ENCODE measurements at regions of chr20 and their contacts with region 1.

Region 1: GRCh38 chr20:21615617-21616080 is 89.8 kb upstream of the PAX1 start:
- DNase-seq: peak; percentile 77 to 98 (median 87)

Region 2: DNA sequence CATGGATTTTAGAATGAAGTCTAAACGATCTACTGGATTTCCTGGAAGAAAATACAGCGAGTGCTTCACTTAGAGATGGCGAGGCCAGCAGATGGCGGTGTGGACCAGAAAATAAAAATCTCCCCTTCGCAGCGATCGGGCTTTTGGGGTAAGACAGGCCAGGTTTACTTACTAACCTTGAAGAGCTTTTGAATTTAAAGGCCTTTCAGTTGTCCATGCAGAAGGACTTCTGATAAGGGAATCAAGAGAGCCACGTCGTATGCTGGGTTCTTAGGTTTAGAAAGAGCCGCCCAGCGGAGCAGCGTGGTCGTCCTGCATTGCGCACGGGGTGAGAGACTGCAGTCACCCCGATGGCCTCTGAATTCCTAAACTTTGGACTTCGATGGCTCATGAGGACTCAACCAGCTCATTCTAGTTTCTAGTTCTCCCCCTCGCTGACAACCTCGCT is 778.1 kb before region 1 on chr20:
- intact Hi-C with region 1: loop called (anchors 5 kb)
- DNase-seq: peak; percentile 50 to 96 (median 80)

Region 3: DNA sequence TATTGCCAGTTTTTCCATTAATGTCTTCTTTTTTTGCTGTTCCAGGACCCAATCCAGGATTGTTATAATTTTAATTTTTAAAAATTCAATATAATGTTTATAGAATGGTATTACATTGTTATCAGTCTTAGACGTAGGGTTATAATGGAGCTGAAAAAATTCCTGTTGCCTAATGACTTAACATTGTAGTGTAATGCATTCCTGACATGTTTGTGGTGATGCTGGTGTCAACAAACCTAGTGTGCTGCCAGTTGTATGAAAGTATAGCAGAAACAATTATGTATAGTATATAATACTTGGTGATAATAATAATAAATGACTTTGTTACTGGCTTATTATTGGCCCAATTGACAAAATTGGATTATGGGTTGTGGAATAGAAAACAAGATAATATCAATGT is 459.4 kb before region 1 on chr20:
- intact Hi-C with region 1: no loop called
- DNase-seq: no peak

Region 4: DNA sequence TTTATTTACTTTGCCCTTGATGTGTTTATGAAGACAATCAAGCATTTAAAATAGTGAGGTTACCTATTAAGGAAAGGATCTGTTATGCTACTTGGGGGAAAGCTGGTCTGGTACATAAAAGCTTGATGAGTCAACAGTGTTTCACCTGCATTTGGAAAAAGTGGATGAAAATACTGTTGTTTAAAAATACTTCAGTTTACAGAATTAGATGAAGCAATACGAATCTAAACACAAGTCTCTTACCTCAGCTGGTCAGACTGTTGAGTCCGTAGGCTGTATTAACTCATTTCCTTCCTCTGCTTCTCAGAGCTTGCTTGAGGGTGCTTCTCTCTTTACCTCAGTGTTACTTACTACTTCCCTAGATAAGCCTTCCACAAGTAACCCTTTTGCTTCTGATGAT is 254.4 kb before region 1 on chr20:
- intact Hi-C with region 1: loop called (anchors 5 kb)
- DNase-seq: no peak

Region 5: DNA sequence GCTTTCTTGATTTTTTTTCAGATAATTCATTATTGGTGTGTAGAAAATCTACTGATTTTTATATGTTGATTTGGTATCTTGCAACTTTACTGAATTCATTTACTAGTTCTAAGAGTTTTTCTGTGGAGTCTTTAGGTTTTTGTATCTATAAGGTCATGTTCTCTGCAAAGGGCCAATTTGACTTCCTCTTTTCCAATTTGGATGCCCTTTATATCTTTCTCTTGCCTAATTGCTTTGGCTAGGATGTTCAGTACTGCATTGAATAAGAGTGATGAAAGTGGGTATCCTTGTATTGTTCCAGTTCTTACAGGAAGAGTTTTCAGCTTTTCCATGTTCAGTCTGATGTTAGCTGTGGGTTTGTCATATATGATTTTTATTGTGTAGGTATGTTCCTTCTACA is 203.9 kb before region 1 on chr20:
- intact Hi-C with region 1: no loop called
- DNase-seq: no peak

Region 6: DNA sequence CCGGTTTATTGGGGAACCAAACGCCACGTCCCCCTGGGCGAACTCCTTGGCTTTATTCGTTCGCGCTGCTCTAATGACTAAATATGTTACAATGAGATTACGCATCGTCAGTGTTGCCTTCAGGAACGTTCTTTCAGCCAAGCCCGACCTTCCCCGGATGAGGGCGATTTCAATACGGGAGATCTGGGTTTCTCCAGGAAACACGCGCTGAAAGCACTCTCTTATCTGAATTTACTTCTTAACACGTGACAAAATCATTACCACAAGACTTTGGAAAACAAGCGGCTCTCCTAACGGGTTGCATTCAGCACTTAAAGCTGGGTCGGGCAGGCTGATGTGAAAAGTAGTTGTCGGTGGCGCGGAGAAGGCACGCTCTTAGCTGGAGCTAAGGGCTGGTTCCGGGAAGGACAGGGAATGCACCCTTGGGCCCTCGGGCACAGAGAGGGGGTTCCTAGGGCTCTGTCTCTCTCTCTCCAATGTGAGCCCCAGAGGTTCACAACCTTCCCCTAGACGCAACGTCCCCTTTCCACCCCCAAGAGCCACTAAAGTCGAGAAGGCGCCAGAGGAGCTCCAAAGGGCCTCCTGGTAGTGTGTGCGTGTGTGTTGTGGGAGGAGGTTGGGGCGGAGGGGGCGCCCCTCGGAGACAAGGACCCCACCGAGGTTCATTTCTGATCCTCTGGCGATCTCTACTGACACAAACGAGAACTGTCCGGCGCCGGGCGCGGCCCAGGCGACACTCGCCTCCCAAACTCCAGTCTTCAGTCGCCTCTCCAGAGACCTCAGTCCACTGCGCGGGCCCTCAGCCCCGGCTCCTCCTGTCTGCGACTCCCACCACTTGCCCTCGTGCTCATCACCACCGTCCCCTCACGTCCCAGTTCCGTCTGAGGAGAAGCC is 94.7 kb before region 1 on chr20:
- intact Hi-C with region 1: loop called (anchors 5 kb)
- DNase-seq: peak in 6 of 10 donors; percentile 46 to 94 (median 82)